CD8-positive, alpha-beta T cell (primary cell): ENCODE measurements at regions of chrX and their contacts with region 1.

Region 1: GRCh38 chrX:13721819-13722519 is 12.5 kb downstream of the TRAPPC2 start:
- DNase-seq: no peak
- ATAC-seq: no peak
- H3K4me3 ChIP-seq: no peak overlapping the region
- H3K4me3 Mint-ChIP-seq: no peak overlapping the region
- H3K27ac ChIP-seq: no peak overlapping the region
- H3K27ac Mint-ChIP-seq: peak overlapping the region; percentile 68
- H3K4me1 ChIP-seq: peaks cover 36% of the 10 kb centered on the region
- H3K4me1 Mint-ChIP-seq: peaks cover 71% of the 10 kb centered on the region
- H3K27me3 ChIP-seq: no peaks in the 10 kb centered on the region
- H3K27me3 Mint-ChIP-seq: no peaks in the 10 kb centered on the region
- CTCF ChIP-seq: no peak

Region 2: GRCh38 chrX:13699183-13699826 is 22.7 kb before region 1 on chrX:
- CTCF ChIA-PET with region 1: no interaction called
- POLR2A ChIA-PET with region 1: interaction called, 3 read pairs
- intact Hi-C with region 1: loop called in 1 of 2 experiments (anchors 2 kb)
- DNase-seq: peak in 2 of 9 experiments; percentile 22 to 46
- ATAC-seq: peak; percentile 31
- H3K4me3 ChIP-seq: no peak overlapping the region
- H3K4me3 Mint-ChIP-seq: no peak overlapping the region
- H3K27ac ChIP-seq: peak overlapping the region in 1 of 2 experiments; percentile 62
- H3K27ac Mint-ChIP-seq: peak overlapping the region; percentile 73
- H3K4me1 ChIP-seq: peaks cover 39% of the 10 kb centered on the region
- H3K4me1 Mint-ChIP-seq: peaks cover 80% of the 10 kb centered on the region
- H3K27me3 ChIP-seq: no peaks in the 10 kb centered on the region
- H3K27me3 Mint-ChIP-seq: no peaks in the 10 kb centered on the region
- CTCF ChIP-seq: no peak